ENCODE measurements at regions of chr19 and their contacts with region 1.

Region 1: DNA sequence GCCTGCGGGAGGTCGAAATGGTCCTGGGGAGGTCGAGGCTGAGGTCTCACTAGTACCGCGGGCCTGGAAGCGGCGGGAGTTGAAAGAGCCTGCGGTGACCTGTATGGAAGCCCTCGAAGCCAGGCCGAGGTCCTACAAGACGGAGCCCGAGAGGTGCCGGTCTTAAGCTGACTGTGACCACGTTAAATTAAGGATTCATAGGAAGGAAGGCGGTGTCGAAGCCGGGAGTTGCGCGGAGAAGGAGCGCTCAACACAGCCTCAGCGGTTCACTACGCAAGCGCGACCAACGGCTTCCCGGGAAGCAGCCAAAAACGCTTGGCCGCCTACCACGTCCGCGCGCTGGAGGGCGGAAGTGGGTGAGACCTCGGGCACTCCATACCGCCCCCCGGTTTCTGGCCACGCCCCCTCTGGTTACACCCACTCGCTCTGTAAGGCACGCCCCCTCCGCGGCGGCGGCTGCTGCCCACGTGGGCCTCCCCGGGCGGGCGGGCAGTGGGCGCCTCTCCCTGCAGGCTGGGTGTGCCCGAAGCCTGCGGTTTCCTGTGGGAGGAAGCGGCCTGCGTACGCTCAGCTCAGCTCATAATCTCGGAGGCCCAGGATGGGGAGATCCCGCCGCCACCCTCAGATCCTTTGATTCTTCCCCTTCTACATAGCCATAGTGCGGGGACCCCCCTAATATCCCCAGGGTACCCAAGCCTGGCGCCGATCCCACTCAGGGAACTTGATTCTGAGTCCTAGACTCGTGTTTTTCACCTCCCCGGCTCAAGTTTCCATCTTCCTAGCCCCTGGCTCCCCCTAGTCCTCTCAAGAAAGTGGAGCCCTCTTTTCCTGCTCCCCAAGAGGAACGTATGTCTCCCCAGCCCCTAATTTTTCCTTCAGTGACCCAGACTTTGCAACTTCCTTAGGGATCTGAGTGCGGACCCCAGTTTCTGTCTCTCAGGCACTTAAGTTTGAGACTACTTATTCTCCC is 3.4 kb upstream of the EMP3 start:
- DNase-seq: peak; percentile 91 to 98 (median 97)
- H3K4me3 ChIP-seq: peak overlapping the region; percentile 48 to 85 (median 70)
- H3K27ac ChIP-seq: peak overlapping the region; percentile 81 to 99 (median 97)
- H3K27me3 ChIP-seq: no peaks in the 10 kb centered on the region
- CTCF ChIP-seq: peak in 49 of 56 donors; percentile 3 to 71 (median 42)

Region 2: DNA sequence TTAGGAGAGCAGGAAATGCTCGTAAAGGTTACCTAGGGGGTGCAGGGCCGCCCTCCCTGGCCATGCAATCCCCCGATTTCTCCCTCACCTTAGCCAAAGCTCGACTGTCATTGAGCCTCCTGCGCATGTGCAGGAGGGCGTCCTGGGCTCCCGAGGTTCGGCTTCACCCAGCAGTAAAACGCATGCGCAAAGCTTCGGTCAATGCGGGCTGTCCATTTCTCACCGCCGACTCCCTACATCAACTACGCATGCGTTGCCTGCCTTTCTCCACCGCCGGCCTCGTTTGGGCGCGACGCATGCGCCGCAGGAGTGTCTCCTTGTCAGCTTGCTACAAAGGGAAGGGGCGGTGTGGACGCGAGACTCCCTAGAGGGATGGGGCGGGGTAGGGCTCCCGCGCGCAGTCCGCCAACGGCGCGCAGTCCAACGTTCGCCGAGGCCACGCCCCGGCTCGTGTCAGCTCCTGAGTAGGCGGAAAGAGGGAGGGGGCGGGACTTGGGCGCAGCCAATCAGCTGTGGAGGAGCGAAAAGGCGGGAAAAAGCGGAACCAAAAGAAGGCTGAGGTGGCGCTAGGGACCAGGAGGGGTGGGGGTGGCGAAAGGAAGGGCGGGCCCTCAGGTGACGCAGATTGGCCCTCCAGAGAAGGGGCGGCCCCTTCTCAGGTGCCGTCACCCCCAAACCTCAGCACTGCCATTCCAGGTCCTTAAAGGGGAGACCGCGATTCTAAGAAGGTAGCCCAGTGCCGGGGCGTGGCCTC is 42.1 kb after region 1 on chr19 and contains the starts of genes SYNGR4 and TMEM143:
- intact Hi-C with region 1: loop called (anchors 2 to 5 kb)
- DNase-seq: peak; percentile 96 to 99 (median 98)
- H3K4me3 ChIP-seq: peak within 1 kb of the TSS; percentile 49 to 95 (median 79)
- H3K27ac ChIP-seq: peak within 1 kb of the TSS; percentile 83 to 100 (median 99)
- H3K27me3 ChIP-seq: no peaks in the 10 kb centered on the region
- CTCF ChIP-seq: peak in 21 of 56 donors; percentile 5 to 49 (median 19)
- total RNA-seq, gene SYNGR4: 0.50 to 3.0 (median 0.83) TPM in 13 of 120 experiments, not detected in the others
- total RNA-seq, gene TMEM143: 9.2 to 32.0 (median 16.5) TPM

Region 3: GRCh38 chr19:48445606-48446481 is 123.9 kb after region 1 on chr19 and contains the start of gene GRWD1:
- intact Hi-C with region 1: loop called (anchors 5 to 10 kb)
- DNase-seq: peak; percentile 84 to 94 (median 90)
- H3K4me3 ChIP-seq: peak within 1 kb of the TSS; percentile 58 to 100 (median 95)
- H3K27ac ChIP-seq: peak within 1 kb of the TSS; percentile 85 to 100 (median 97)
- H3K27me3 ChIP-seq: peaks cover 0 to 10% (median 0%) of the 10 kb centered on the region in 45 donors
- CTCF ChIP-seq: peak in 27 of 56 donors; percentile 1 to 68 (median 26)
- total RNA-seq, gene GRWD1: 14.2 to 29.9 (median 20.2) TPM

Region 4: DNA sequence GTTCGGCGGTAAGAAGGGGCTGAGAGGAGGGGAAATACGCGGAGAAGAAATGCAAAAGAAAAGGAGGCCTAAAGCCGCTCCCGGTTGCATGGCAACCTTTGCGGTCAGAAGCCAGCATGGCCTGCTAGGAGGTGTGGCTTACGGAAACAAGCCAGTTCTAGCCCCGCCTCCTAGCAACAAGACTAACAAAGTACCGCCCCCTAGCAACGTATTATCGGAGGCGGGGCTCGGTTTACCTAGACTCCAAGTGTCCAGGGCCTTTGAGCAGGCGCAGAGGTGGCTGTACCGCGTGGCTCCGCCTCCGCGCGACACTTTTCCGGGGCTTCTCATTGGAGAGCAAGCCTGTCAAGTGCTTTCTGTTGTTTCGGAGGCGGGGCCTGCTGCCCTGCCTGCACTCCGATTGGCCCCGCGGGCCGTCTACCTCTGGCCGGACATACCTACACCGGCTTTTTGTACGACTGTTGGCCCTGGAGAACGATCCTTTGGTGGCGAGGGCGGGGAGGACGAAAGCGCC is 146.9 kb after region 1 on chr19:
- intact Hi-C with region 1: loop called (anchors 2 to 10 kb)
- DNase-seq: peak; percentile 99 to 100 (median 100)
- H3K4me3 ChIP-seq: peak overlapping the region; percentile 77 to 100 (median 98)
- H3K27ac ChIP-seq: peak overlapping the region in 56 of 59 donors; percentile 62 to 100 (median 96)
- H3K27me3 ChIP-seq: no peaks in the 10 kb centered on the region
- CTCF ChIP-seq: peak in 22 of 56 donors; percentile 0 to 46 (median 26)

Region 5: GRCh38 chr19:48588670-48589399 is 266.9 kb after region 1 on chr19:
- intact Hi-C with region 1: loop called in 1 of 2 experiments (anchors 5 kb)
- DNase-seq: peak; percentile 81 to 91 (median 88)
- H3K4me3 ChIP-seq: peak overlapping the region in 57 of 59 donors; percentile 22 to 68 (median 47)
- H3K27ac ChIP-seq: peak overlapping the region in 2 of 59 donors; percentile 19 to 21
- H3K27me3 ChIP-seq: no peaks in the 10 kb centered on the region
- CTCF ChIP-seq: peak; percentile 58 to 93 (median 87)